Posterior vena cava (tissue), 2 donors: ENCODE measurements at regions of chr5 and their contacts with region 1.

Region 1: DNA sequence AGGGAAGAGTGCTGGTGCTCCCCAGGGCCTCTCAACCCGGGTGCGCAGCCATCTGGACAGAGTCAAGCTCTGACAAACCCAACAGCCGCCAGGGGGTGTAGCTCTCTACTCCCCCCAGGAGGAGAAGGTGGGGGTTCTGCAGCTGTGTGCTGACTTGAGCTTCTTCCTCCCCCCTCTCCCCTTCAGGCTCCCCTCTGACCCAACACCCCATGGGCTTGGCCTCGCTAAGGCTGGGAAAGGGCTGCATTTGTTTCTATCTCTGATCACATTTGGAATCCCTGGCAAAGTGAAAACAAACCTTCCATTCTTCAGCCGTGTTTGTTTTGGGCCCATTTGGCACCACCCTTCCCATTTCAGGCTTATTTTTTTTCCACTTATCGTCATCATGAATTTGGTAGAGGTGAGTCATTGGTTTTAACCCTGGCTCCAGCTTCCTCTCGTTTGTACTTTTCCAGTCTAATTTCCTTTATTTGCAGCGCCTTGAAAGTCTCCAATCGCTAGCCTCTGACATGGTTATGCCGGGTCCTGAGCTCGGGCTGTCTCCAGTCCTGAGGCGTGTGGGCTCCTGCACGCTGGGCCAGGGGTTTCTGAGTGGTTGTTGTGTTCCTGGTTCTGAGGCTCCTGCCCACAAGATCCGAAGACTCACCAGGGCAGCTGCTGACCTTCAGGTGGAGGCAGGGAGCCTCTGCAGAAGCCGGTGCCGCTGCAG is 36.1 kb downstream of the DAP start:
- DNase-seq: no peak

Region 2: DNA sequence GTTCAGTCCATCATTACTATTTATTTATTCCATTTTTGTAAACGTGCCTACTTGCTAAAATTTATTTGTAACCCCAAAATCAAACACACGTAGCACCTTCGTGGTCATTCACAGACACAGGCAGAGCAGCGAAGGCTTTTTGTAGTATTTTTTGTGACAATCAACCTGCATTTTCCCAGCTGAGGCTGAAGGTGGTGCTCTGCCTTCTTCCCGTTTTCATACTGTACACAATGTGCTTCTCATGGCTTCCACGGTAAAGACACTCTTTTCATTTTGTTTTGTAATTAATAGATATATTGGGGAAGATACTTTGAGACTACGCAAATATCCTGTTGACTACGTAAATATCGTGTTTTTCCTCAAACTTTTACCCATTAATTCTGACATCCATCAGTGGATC is 16.7 kb after region 1 on chr5:
- intact Hi-C with region 1: loop called in 1 of 2 experiments (anchors 1 kb)
- DNase-seq: no peak

Region 3: DNA sequence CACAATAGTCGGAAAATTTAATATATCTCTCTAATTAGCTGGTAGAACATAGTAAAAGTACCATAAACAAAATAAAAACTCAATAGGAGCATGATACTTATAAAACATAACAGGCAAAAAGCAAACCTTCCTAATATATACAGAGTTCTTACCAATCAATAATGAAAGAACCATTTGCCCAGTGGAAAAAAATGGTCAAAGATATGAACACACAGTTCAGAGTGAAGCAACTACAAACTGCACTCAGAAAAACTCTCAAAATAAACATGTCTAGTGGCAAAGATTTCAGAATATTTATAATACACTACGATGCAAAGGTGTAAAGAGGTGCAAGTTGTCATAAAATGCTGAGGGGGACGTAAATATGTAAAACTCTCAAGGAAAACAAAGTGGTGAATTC is 1755.5 kb after region 1 on chr5:
- intact Hi-C with region 1: loop called in 1 of 2 experiments (anchors 5 kb)
- DNase-seq: no peak